Right cardiac atrium (tissue), 5 donors: ENCODE measurements at regions of chr4 and their contacts with region 1.

Region 1: GRCh38 chr4:99563310-99564186 is at the start of gene TRMT10A:
- DNase-seq: peak; percentile 99 to 100 (median 99)
- ATAC-seq: peak; percentile 99
- H3K4me3 ChIP-seq: peak within 1 kb of the TSS; percentile 90
- H3K27ac ChIP-seq: peak within 1 kb of the TSS; percentile 100
- H3K4me1 ChIP-seq: no peaks in the 10 kb centered on the region
- H3K27me3 ChIP-seq: no peaks in the 10 kb centered on the region
- total RNA-seq, gene TRMT10A: 2.4 to 5.0 (median 3.9) TPM

Region 2: GRCh38 chr4:99447079-99447478 is 116.5 kb before region 1 on chr4:
- intact Hi-C with region 1: no loop called
- DNase-seq: no peak
- ATAC-seq: no peak
- H3K4me3 ChIP-seq: no peak overlapping the region
- H3K27ac ChIP-seq: no peak overlapping the region
- H3K4me1 ChIP-seq: no peaks in the 10 kb centered on the region
- H3K27me3 ChIP-seq: no peaks in the 10 kb centered on the region

Region 3: GRCh38 chr4:99808260-99808857 is 244.8 kb after region 1 on chr4:
- intact Hi-C with region 1: loop called (anchors 5 kb)
- DNase-seq: peak; percentile 17 to 75 (median 65)
- ATAC-seq: peak; percentile 65 to 67
- H3K4me3 ChIP-seq: no peak overlapping the region
- H3K27ac ChIP-seq: no peak overlapping the region
- H3K4me1 ChIP-seq: no peaks in the 10 kb centered on the region
- H3K27me3 ChIP-seq: no peaks in the 10 kb centered on the region

Region 4: DNA sequence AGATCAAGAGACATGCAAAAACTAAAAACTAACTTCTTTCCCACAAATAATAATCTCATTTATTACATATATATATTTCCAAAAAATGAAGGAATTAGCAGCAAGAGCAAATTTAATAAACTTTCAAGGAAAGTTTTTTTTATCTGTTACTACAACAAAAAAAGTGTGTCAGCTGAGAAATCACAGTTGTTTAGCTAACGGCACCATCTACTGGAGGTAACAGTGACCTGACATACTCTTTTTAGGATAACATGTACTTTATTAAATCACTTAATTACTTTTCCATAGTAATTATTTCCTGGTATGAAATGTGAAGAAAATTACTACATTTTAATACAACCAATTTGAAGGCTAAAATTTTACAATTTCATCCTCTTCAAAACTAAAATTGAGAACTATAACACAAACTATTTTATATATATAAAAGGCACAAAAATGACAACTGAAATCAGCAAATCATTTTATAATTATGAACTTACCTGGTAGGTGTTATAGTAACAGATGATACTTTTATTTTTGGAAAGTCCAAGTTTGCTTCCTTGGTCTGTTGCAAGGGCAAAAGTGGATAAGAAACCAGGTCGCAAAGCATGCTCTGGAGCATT is 321.6 kb after region 1 on chr4:
- intact Hi-C with region 1: loop called in 3 of 4 experiments (anchors 10 kb)
- DNase-seq: no peak
- ATAC-seq: no peak
- H3K4me3 ChIP-seq: no peak overlapping the region
- H3K27ac ChIP-seq: no peak overlapping the region
- H3K4me1 ChIP-seq: no peaks in the 10 kb centered on the region
- H3K27me3 ChIP-seq: no peaks in the 10 kb centered on the region

Region 5: DNA sequence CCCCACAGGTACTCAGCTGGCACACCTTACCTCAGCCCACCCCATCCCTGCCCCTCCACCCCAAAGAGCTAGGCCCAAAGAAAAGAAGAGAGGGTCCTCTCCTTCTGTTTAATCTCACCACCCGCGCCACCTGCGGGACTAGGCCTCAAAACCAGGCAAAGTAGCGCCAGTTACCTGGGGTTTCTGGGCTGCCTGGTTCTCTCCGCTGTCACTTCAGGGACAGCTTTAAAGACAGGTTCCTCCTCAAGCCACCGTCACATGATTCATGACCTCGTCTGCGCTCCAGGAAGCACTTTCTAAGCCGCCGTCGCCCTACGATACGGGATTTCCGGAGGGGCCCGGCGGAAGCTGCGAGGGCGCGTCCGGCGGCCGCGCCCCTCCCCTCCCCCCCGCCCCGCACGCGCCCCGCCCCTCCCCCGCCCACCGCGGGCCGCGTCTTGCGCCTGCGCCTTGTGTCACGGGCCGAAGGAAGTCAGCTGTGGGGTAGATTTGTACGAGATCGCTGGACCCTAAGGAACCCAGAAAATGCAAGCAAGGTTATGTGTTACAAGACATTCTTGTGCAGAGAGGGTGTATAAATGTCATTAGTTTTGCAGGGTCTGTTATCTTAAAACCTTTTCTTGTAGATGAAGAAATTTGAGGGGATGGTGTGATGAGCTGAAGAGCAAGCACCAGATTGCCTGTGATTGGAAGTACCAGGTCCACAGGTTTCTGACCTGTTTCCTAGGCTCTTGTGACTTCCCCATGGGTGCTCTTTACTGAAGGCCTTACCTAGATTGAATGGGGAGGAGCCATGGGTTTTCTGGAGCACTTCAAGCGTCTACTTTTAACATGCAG is 330.8 kb after region 1 on chr4 and contains the start of gene LAMTOR3:
- intact Hi-C with region 1: loop called in 3 of 4 experiments (anchors 10 kb)
- DNase-seq: peak; percentile 92 to 96 (median 96)
- ATAC-seq: peak; percentile 99
- H3K4me3 ChIP-seq: peak within 1 kb of the TSS; percentile 94
- H3K27ac ChIP-seq: peak within 1 kb of the TSS; percentile 89
- H3K4me1 ChIP-seq: peaks cover 2% of the 10 kb centered on the region
- H3K27me3 ChIP-seq: no peaks in the 10 kb centered on the region
- total RNA-seq, gene LAMTOR3: 24.9 to 38.3 (median 32.4) TPM

Region 6: GRCh38 chr4:99949034-99949998 is 385.8 kb after region 1 on chr4:
- intact Hi-C with region 1: loop called in 3 of 4 experiments (anchors 5 to 10 kb)
- DNase-seq: peak; percentile 83 to 92 (median 92)
- ATAC-seq: peak; percentile 32 to 38
- H3K4me3 ChIP-seq: peak overlapping the region; percentile 62
- H3K27ac ChIP-seq: peak overlapping the region; percentile 99
- H3K4me1 ChIP-seq: peaks cover 1% of the 10 kb centered on the region
- H3K27me3 ChIP-seq: no peaks in the 10 kb centered on the region